Activated CD8-positive, alpha-beta T cell treated with anti-CD3 and anti-CD28 coated beads for 36 hours (primary cell): ENCODE measurements at regions of chr17 and their contacts with region 1.

Region 1: DNA sequence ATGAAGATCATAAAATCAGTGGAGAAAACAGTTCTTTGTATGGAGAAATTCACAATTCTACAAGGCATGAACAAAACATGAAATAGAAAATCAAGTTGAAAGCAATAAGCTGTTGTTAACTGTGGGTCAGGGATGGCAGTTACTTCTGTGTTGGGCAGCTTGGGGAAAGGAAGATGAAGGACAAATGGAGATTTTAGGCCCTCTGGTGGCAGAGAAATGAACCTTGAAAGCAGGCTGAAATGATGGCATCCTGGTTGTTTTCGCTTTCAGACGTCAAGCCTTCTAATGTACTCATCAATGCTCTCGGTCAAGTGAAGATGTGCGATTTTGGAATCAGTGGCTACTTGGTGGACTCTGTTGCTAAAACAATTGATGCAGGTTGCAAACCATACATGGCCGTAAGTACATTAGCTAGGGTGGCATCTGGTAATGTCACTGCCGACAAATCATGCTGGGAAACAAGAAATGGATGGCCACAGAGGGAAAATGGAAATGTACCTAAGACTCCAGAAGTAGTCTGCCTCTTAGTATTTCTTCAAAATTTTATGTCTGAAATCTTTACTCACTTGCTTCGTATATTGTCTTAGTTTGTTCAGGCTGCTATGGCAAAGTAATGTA is 108.9 kb downstream of the MAP2K6 start:
- DNase-seq: peak; percentile 28
- ATAC-seq: peak; percentile 37
- H3K4me3 Mint-ChIP-seq: no peak overlapping the region
- H3K27ac Mint-ChIP-seq: no peak overlapping the region
- H3K4me1 Mint-ChIP-seq: peaks cover 2% of the 10 kb centered on the region
- H3K27me3 Mint-ChIP-seq: no peaks in the 10 kb centered on the region
- CTCF ChIP-seq: peak; percentile 63

Region 2: GRCh38 chr17:69335058-69335457 is 188.3 kb before region 1 on chr17:
- CTCF ChIA-PET with region 1: interaction called, 10 read pairs
- POLR2A ChIA-PET with region 1: no interaction called
- intact Hi-C with region 1: no loop called
- DNase-seq: no peak
- ATAC-seq: no peak
- H3K4me3 Mint-ChIP-seq: peak overlapping the region; percentile 22
- H3K27ac Mint-ChIP-seq: no peak overlapping the region
- H3K4me1 Mint-ChIP-seq: peaks cover 3% of the 10 kb centered on the region
- H3K27me3 Mint-ChIP-seq: peaks cover 7% of the 10 kb centered on the region
- CTCF ChIP-seq: peak; percentile 46

Region 3: GRCh38 chr17:69414408-69415274 is 108.7 kb before region 1 on chr17 and contains the start of gene MAP2K6:
- CTCF ChIA-PET with region 1: interaction called, 5 read pairs
- POLR2A ChIA-PET with region 1: no interaction called
- intact Hi-C with region 1: loop called (anchors 10 kb)
- DNase-seq: peak; percentile 94
- ATAC-seq: peak; percentile 98
- H3K4me3 Mint-ChIP-seq: no peak within 1 kb of the TSS
- H3K27ac Mint-ChIP-seq: no peak within 1 kb of the TSS
- H3K4me1 Mint-ChIP-seq: peaks cover 9% of the 10 kb centered on the region
- H3K27me3 Mint-ChIP-seq: no peaks in the 10 kb centered on the region
- CTCF ChIP-seq: no peak
- total RNA-seq, gene MAP2K6: 3.2 to 3.3 TPM

Region 4: DNA sequence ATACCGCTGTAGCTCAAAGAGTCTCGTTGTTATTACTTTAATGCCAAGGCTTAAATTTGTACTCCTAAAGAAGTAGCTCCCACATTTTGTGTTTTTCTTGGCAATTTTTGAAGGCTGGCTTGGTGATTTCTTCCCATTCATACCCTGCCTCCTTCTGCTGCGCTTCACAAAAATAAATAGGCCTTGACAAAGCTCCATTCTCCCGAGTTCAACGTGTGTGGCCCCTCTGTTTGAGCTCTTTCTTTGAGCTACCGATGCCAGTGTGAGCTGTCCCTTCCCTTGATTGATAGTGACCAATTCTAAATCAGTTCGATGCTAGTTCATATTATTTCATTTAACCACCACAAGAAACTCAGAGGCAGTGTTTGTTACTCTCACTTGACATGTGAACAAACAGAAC is 12.1 kb before region 1 on chr17:
- CTCF ChIA-PET with region 1: interaction called, 16 read pairs
- POLR2A ChIA-PET with region 1: no interaction called
- intact Hi-C with region 1: no loop called
- DNase-seq: no peak
- ATAC-seq: no peak
- H3K4me3 Mint-ChIP-seq: no peak overlapping the region
- H3K27ac Mint-ChIP-seq: no peak overlapping the region
- H3K4me1 Mint-ChIP-seq: peaks cover 4% of the 10 kb centered on the region
- H3K27me3 Mint-ChIP-seq: no peaks in the 10 kb centered on the region
- CTCF ChIP-seq: no peak

Region 5: GRCh38 chr17:69539781-69540319 is 16.5 kb after region 1 on chr17:
- CTCF ChIA-PET with region 1: interaction called, 12 read pairs
- POLR2A ChIA-PET with region 1: interaction called, 3 read pairs
- intact Hi-C with region 1: no loop called
- DNase-seq: no peak
- ATAC-seq: peak; percentile 37
- H3K4me3 Mint-ChIP-seq: no peak overlapping the region
- H3K27ac Mint-ChIP-seq: peak overlapping the region; percentile 43
- H3K4me1 Mint-ChIP-seq: peaks cover 13% of the 10 kb centered on the region
- H3K27me3 Mint-ChIP-seq: no peaks in the 10 kb centered on the region
- CTCF ChIP-seq: no peak

Region 6: GRCh38 chr17:70552230-70552981 is 1029.1 kb after region 1 on chr17:
- CTCF ChIA-PET with region 1: interaction called, 11 read pairs
- POLR2A ChIA-PET with region 1: no interaction called
- intact Hi-C with region 1: no loop called
- DNase-seq: no peak
- ATAC-seq: no peak
- H3K4me3 Mint-ChIP-seq: no peak overlapping the region
- H3K27ac Mint-ChIP-seq: no peak overlapping the region
- H3K4me1 Mint-ChIP-seq: no peaks in the 10 kb centered on the region
- H3K27me3 Mint-ChIP-seq: peaks cover 1% of the 10 kb centered on the region
- CTCF ChIP-seq: peak; percentile 48